ENCODE measurements at regions of chr19 and their contacts with region 1.

Region 1: GRCh38 chr19:7340959-7341837 is 7.5 kb upstream of the ARHGEF18 start:
- DNase-seq: peak; percentile 52
- H3K4me3 ChIP-seq: no peak overlapping the region
- H3K27ac ChIP-seq: no peak overlapping the region
- H3K4me1 ChIP-seq: no peaks in the 10 kb centered on the region
- H3K27me3 ChIP-seq: no peaks in the 10 kb centered on the region
- CTCF ChIP-seq: peak; percentile 82 to 86

Region 2: GRCh38 chr19:6887316-6887715 is 453.9 kb before region 1 on chr19 and contains the start of gene ADGRE1:
- CTCF ChIA-PET with region 1: no interaction called
- dilution Hi-C with region 1: loop called (anchors 10 kb)
- in situ Hi-C with region 1: no loop called
- intact Hi-C with region 1: no loop called
- DNase-seq: no peak
- H3K4me3 ChIP-seq: no peak within 1 kb of the TSS
- H3K27ac ChIP-seq: no peak within 1 kb of the TSS
- H3K4me1 ChIP-seq: no peaks in the 10 kb centered on the region
- H3K27me3 ChIP-seq: no peaks in the 10 kb centered on the region
- CTCF ChIP-seq: no peak
- total RNA-seq, gene ADGRE1: not detected

Region 3: GRCh38 chr19:7104747-7105447 is 236.3 kb before region 1 on chr19:
- CTCF ChIA-PET with region 1: interaction called, 3 read pairs
- dilution Hi-C with region 1: no loop called
- in situ Hi-C with region 1: loop called in 1 of 2 experiments (anchors 5 kb)
- intact Hi-C with region 1: loop called (anchors 1 kb)
- DNase-seq: no peak
- H3K4me3 ChIP-seq: no peak overlapping the region
- H3K27ac ChIP-seq: no peak overlapping the region
- H3K4me1 ChIP-seq: peaks cover under 1% of the 10 kb centered on the region
- H3K27me3 ChIP-seq: no peaks in the 10 kb centered on the region
- CTCF ChIP-seq: no peak

Region 4: GRCh38 chr19:7145494-7146485 is 195.4 kb before region 1 on chr19:
- CTCF ChIA-PET with region 1: no interaction called
- dilution Hi-C with region 1: no loop called
- in situ Hi-C with region 1: loop called (anchors 5 kb)
- intact Hi-C with region 1: loop called (anchors 1 kb)
- DNase-seq: no peak
- H3K4me3 ChIP-seq: no peak overlapping the region
- H3K27ac ChIP-seq: no peak overlapping the region
- H3K4me1 ChIP-seq: no peaks in the 10 kb centered on the region
- H3K27me3 ChIP-seq: no peaks in the 10 kb centered on the region
- CTCF ChIP-seq: no peak

Region 5: DNA sequence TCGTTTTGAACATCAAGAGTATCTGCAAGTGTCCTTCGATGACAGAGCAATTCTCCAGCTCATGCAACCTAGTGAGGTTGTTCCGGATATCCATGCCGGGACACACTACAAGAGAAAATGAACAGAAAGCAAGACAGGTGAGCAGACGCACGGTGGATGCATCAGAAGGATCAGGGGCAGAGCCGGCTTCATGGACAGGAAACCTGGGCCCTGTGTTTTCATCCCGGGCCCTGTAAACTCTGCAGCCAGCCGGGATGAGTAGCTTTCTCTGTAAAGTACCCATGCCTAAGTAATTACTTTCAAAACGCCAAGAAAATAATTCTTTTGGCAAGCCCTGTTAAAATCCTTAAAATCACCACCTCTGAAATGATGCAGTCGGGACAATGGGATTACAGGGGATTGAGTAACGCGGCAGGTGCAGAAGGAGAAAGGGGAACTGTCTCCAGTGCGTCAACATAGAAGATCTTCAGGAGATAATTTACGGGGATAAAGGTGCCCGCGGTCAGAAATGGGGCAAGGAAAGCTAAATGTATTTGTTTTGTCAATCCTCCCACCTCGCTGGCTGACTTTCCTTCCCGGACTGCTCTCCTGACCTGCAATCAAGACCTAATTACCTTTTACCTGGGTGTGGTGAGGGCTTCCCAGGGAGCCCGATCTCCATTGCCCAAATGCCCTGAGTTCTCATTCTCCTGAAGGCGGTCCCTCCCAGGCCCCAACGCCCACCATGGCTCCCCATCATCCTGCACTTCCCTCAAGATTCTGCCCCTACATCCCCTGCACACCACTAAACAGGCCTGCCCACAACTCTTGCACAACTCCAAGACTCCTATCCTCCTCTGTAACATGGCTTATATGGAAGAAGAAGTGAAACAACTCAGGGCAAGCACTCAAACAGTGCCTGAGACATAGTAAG is 73.2 kb before region 1 on chr19:
- CTCF ChIA-PET with region 1: no interaction called
- dilution Hi-C with region 1: loop called (anchors 10 kb)
- in situ Hi-C with region 1: no loop called
- intact Hi-C with region 1: no loop called
- DNase-seq: no peak
- H3K4me3 ChIP-seq: no peak overlapping the region
- H3K27ac ChIP-seq: no peak overlapping the region
- H3K4me1 ChIP-seq: no peaks in the 10 kb centered on the region
- H3K27me3 ChIP-seq: no peaks in the 10 kb centered on the region
- CTCF ChIP-seq: no peak

Region 6: GRCh38 chr19:7366701-7367420 is 25.7 kb after region 1 on chr19:
- CTCF ChIA-PET with region 1: no interaction called
- dilution Hi-C with region 1: no loop called
- in situ Hi-C with region 1: no loop called
- intact Hi-C with region 1: no loop called
- DNase-seq: peak; percentile 49
- H3K4me3 ChIP-seq: no peak overlapping the region
- H3K27ac ChIP-seq: no peak overlapping the region
- H3K4me1 ChIP-seq: no peaks in the 10 kb centered on the region
- H3K27me3 ChIP-seq: no peaks in the 10 kb centered on the region
- CTCF ChIP-seq: peak; percentile 41 to 46

Measured in mammary epithelial cell (primary cell).